HepG2 (cell line): ENCODE measurements at regions of chr15 and their contacts with region 1.

Region 1: DNA sequence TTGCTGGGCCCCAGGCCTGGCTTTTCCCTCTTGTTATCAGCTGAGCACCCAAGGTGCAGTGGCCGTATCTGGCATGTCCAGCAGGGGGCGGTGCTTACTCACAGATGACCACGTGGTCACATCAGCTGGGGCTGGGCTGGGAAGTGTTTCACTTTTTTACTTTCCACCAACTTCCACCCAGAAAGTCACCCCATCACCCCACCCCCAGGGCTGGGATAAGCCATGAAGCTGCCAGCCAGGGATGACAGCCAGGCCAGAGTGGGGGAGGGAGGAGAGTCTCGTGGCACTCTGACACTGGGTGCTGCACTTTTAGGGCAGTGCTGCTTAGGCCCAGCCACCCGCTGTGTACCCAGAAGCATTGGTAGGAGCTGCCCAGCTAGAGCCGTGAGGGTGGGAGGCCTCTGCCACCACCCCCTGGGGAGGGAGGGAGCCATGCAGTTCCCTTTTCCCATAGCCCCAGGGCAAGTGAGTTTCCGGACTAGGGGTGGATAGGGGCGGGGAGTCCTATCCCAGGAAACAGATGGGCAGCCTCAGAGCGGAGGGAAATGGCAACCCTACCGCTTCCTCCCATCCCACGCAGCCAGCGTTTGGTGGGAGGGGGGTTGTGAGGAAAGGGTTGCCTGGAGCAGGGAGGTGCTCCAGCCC is 6.1 kb downstream of the PPCDC start:
- DNase-seq: peak; percentile 66
- ATAC-seq: peak; percentile 90
- H3K4me3 ChIP-seq: no peak overlapping the region
- H3K27ac ChIP-seq: no peak overlapping the region
- H3K4me1 ChIP-seq: peaks cover 35% of the 10 kb centered on the region
- H3K27me3 ChIP-seq: no peaks in the 10 kb centered on the region
- CTCF ChIP-seq: peak; percentile 95
- EP300 ChIP-seq: no peak
- POLR2A ChIP-seq: no peak
- RAD21 ChIP-seq: peak; percentile 94

Region 2: DNA sequence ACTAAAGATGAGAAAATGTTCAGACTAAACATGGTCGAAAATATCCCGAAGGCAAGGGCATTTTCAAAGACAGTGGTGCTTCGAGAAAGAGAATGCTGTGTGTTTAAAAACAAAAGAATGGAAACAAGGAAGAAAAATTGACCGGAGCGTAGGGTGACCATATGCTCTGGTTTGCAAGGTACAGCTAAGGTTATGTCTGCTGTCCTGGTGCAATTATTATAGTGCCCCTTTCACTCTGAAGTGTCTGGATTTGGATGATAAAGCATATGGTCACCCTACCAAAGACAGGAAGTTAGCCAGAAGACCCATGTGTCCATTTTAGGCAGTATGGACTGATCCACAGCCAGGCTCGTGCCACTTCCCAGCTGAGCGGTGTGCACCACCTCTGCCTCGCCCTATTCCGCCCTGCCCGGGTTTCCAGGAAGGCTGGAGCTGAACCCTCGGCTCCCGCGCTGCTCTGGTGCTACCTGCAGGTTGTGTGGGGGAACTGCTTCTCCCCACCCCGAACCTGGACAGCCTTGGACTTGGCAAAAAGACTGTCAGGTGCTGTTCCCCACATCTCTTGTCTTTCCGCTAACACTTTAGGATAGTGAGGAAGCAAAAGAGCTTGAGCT is 278.4 kb after region 1 on chr15:
- CTCF ChIA-PET with region 1: interaction called, 3 read pairs
- POLR2A ChIA-PET with region 1: no interaction called
- in situ Hi-C with region 1: no loop called
- intact Hi-C with region 1: loop called (anchors 10 kb)
- DNase-seq: peak; percentile 58
- ATAC-seq: peak; percentile 98
- H3K4me3 ChIP-seq: peak overlapping the region in 1 of 3 experiments; percentile 9; a peak in 1 of 6 replicates
- H3K27ac ChIP-seq: no peak overlapping the region
- H3K4me1 ChIP-seq: peaks cover 25% of the 10 kb centered on the region
- H3K27me3 ChIP-seq: peaks cover 0 to 22% of the 10 kb centered on the region in 2 experiments; a peak in 3 of 5 replicates
- CTCF ChIP-seq: peak; percentile 90
- EP300 ChIP-seq: no peak
- POLR2A ChIP-seq: no peak
- RAD21 ChIP-seq: peak; percentile 86